ENCODE measurements at regions of chr1 and their contacts with region 1.

Region 1: DNA sequence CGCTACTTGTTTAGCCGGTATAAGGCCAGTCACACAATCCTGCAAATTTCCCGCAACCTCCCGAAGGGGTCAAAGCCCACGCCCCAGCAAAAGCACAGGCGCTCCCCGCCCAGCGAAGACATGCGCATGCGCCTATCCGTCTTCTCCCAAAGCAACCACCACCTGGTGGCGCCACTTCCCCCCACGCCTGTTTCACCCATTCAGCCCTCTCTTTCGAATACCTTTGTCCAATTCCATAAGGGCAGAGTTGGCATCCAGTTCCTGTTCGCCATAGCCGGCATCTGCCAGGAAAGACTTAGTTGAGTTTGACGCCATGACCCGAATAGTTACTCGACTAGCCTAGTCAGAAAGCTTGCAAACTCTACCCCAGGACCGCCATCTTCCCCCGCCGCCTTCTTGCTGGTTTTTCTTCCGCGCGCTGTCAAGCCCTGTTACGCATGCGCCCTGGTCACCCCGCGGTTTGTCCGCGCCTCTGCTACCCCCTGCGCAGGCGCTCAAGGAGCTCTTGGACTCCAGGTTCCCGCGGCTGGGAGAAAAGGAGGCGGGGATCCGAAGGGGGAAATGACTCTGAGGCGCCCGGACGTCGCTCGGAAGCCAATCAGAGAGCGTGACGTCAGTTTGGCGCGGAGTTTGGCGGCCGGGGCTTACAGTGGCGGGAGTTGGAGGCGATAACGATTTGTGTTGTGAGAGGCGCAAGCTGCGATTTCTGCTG is at the starts of genes DTL and INTS7:
- DNase-seq: peak; percentile 96 to 99 (median 98)
- H3K4me3 ChIP-seq: peak within 1 kb of the TSS; percentile 96
- H3K4me3 Mint-ChIP-seq: peak within 1 kb of the TSS; percentile 90 to 100 (median 99)
- H3K27ac ChIP-seq: peak within 1 kb of the TSS; percentile 70
- H3K27ac Mint-ChIP-seq: peak within 1 kb of the TSS; percentile 84 to 99 (median 95)
- H3K4me1 ChIP-seq: peaks cover 26% of the 10 kb centered on the region
- H3K4me1 Mint-ChIP-seq: peaks cover 40 to 76% (median 70%) of the 10 kb centered on the region in 3 donors
- H3K27me3 ChIP-seq: no peaks in the 10 kb centered on the region
- H3K27me3 Mint-ChIP-seq: peaks cover 0 to 5% of the 10 kb centered on the region in 2 donors
- total RNA-seq, gene DTL: 85.0 to 86.9 TPM
- total RNA-seq, gene INTS7: 35.2 to 36.0 TPM

Region 2: GRCh38 chr1:211675230-211676105 is 359.8 kb before region 1 on chr1 and contains the start of gene NEK2:
- CTCF ChIA-PET with region 1: interaction called, 39 read pairs
- POLR2A ChIA-PET with region 1: interaction called, 5 read pairs
- DNase-seq: peak; percentile 70 to 89 (median 80)
- H3K4me3 ChIP-seq: peak within 1 kb of the TSS; percentile 74
- H3K4me3 Mint-ChIP-seq: peak within 1 kb of the TSS; percentile 86 to 98 (median 92)
- H3K27ac ChIP-seq: peak within 1 kb of the TSS; percentile 65
- H3K27ac Mint-ChIP-seq: peak within 1 kb of the TSS; percentile 61 to 88 (median 81)
- H3K4me1 ChIP-seq: peaks cover 4% of the 10 kb centered on the region
- H3K4me1 Mint-ChIP-seq: peaks cover 16 to 23% (median 19%) of the 10 kb centered on the region in 3 donors
- H3K27me3 ChIP-seq: no peaks in the 10 kb centered on the region
- H3K27me3 Mint-ChIP-seq: no peaks in the 10 kb centered on the region
- total RNA-seq, gene NEK2: 14.1 to 14.8 TPM

Region 3: DNA sequence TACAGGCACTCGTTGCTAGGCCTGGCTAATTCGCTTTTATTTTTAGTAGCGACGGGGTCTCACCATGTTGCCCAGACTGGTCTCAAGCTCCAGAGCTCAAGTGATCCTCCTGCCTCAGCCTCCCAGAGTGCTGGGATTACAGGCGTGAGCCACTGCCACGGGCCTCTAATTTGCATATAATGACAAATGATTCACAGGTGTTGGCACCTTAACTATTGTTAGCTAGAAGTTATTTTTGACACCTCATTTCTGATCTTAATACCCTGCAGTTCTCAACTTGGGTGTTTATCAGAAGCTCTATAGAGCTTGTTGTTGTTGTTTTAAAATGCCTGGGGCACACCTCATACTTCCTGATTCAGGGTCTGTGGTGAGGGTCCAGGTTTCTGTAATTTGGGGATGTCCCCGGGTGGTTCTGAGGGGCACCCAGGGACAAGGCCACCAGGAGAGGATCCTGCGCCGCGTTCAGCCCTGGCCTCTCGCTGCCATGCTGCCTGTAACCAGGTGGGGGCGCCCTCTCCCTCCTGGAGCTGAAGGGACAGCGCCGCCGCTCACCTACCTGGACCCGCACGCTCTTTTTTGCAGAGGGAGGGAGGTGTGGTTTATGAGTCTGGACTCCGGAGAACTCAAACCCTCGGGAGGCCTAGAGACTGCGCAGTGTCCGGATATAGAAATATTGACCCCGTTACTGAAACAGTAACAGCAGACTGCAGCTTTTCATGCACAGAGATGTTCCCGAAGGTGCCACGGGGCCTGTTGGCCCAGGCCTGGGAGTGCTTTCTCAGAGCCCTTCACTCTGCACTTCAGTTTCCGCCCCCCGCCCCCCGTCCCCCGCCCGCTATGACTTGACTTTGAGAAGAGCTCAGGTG is 336.9 kb before region 1 on chr1:
- CTCF ChIA-PET with region 1: interaction called, 24 read pairs
- POLR2A ChIA-PET with region 1: no interaction called
- DNase-seq: peak; percentile 72 to 84 (median 76)
- H3K4me3 ChIP-seq: peak overlapping the region; percentile 51
- H3K4me3 Mint-ChIP-seq: peak overlapping the region in 6 of 7 donors; percentile 65 to 84 (median 76)
- H3K27ac ChIP-seq: no peak overlapping the region
- H3K27ac Mint-ChIP-seq: peak overlapping the region in 3 of 8 donors; percentile 61 to 90 (median 78)
- H3K4me1 ChIP-seq: peaks cover 16% of the 10 kb centered on the region
- H3K4me1 Mint-ChIP-seq: peaks cover 35 to 53% (median 42%) of the 10 kb centered on the region in 3 donors
- H3K27me3 ChIP-seq: no peaks in the 10 kb centered on the region
- H3K27me3 Mint-ChIP-seq: no peaks in the 10 kb centered on the region

Region 4: GRCh38 chr1:212024469-212025149 is 10.7 kb before region 1 on chr1:
- CTCF ChIA-PET with region 1: interaction called, 20 read pairs
- POLR2A ChIA-PET with region 1: no interaction called
- DNase-seq: no peak
- H3K4me3 ChIP-seq: no peak overlapping the region
- H3K4me3 Mint-ChIP-seq: no peak overlapping the region
- H3K27ac ChIP-seq: no peak overlapping the region
- H3K27ac Mint-ChIP-seq: no peak overlapping the region
- H3K4me1 ChIP-seq: no peaks in the 10 kb centered on the region
- H3K4me1 Mint-ChIP-seq: peaks cover 13 to 31% (median 29%) of the 10 kb centered on the region in 3 donors
- H3K27me3 ChIP-seq: no peaks in the 10 kb centered on the region
- H3K27me3 Mint-ChIP-seq: no peaks in the 10 kb centered on the region

Region 5: DNA sequence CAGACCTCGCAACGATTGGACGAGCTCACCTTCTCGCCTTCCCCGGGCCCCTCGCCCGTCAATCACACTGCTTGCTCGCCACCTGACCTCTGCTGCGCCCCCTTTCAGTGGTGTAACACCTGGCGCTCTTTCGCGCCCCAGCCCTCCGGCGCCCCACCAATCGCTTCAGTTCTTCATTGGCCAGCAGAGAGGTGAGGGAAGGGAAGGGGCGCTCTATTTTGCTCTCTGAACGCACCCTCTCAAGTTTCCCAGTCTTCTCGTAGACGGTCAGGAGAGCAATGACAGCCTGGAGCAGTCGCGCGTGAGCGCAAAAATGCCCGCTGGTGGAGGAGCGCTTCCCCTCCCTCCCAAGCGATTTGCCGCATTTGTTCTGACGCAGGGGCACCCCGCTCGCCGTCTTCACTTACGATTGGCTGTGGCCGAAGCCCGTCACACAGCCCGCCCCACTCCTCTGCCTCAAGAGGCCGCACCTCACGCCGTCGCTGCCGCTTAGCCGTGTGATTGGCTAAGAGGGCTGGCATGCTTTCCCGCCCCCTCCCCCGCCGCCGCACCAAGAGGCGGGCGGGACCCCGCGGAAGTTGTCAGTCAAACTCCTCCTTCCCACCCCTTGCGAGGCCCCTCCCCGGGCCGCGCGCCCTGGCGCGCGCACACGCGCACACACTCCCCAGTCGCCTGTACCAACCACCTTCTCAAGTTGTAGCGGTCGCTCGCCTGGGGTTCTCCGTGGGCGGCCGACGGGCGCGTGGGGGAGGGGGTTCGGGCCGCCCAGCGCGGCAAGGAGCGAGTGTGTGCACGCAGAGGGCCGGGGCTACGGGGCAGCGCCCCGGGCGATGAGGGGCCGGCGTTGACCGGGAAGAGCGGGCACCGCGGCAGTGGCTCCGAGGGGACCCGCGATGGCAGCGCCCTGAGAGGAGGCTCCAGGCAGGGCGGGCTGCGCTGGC is 249.7 kb after region 1 on chr1 and contains the start of gene PPP2R5A:
- CTCF ChIA-PET with region 1: interaction called, 7 read pairs
- POLR2A ChIA-PET with region 1: interaction called, 24 read pairs
- DNase-seq: peak; percentile 97 to 99 (median 99)
- H3K4me3 ChIP-seq: peak within 1 kb of the TSS; percentile 98
- H3K4me3 Mint-ChIP-seq: peak within 1 kb of the TSS; percentile 96 to 100 (median 99)
- H3K27ac ChIP-seq: peak within 1 kb of the TSS; percentile 97
- H3K27ac Mint-ChIP-seq: peak within 1 kb of the TSS; percentile 91 to 100 (median 98)
- H3K4me1 ChIP-seq: peaks cover 33% of the 10 kb centered on the region
- H3K4me1 Mint-ChIP-seq: peaks cover 34 to 53% (median 45%) of the 10 kb centered on the region in 3 donors
- H3K27me3 ChIP-seq: no peaks in the 10 kb centered on the region
- H3K27me3 Mint-ChIP-seq: no peaks in the 10 kb centered on the region
- total RNA-seq, gene PPP2R5A: 46.1 to 46.9 TPM